ENCODE measurements at regions of chr7 and their contacts with region 1.

Region 1: DNA sequence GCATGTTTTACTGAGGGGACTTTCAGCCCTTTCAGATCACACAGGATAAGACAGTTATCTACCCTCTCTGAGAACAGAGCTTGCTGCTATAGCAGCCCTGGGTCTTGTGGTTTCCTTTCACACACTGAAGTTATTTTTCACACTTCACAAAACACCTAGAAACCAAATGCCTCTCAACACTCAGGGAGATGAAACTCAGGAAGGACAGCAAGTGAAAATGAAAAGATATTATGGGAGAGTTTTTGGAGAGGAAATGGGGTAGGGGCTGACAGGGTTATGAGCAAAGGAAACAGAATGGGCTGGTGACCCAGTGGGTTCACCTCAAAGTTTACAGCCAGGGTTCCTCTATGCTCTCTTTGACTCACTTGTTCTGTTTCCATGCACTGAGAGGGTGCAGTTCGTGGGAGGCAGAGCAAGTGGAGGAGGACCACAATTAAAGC is 17.0 kb upstream of the GIMAP2 start:
- DNase-seq: peak; percentile 74
- H3K4me3 Mint-ChIP-seq: peak overlapping the region; percentile 74
- H3K27ac Mint-ChIP-seq: peak overlapping the region; percentile 91
- H3K4me1 Mint-ChIP-seq: peaks cover 94% of the 10 kb centered on the region
- H3K27me3 Mint-ChIP-seq: no peaks in the 10 kb centered on the region

Region 2: DNA sequence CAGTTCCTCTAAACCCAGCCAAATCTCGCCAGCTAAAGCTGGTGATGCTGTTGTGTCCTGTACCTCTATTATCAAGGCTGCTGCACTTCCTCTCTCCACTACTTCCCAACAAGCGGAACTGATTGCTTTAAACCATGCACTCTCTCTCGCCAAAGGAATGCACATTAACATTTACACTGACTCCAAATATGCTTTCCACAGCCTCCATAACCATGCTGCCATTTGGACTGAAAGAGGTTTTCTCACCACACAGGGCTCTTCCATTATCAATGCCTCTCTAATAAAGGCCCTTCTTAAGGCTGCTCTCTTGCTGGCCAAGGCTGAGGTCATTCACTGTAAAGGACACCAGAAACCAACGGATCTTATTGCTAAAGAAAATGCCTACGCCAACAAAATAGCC is 356.8 kb before region 1 on chr7:
- intact Hi-C with region 1: no loop called
- DNase-seq: no peak
- H3K4me3 Mint-ChIP-seq: no peak overlapping the region
- H3K27ac Mint-ChIP-seq: no peak overlapping the region
- H3K4me1 Mint-ChIP-seq: no peaks in the 10 kb centered on the region
- H3K27me3 Mint-ChIP-seq: no peaks in the 10 kb centered on the region

Region 3: GRCh38 chr7:150378853-150379440 is 289.5 kb before region 1 on chr7 and contains the start of gene ZNF775:
- intact Hi-C with region 1: loop called (anchors 5 kb)
- DNase-seq: peak; percentile 93
- H3K4me3 Mint-ChIP-seq: peak within 1 kb of the TSS; percentile 90
- H3K27ac Mint-ChIP-seq: peak within 1 kb of the TSS; percentile 83
- H3K4me1 Mint-ChIP-seq: peaks cover 59% of the 10 kb centered on the region
- H3K27me3 Mint-ChIP-seq: no peaks in the 10 kb centered on the region
- total RNA-seq, gene ZNF775: 3.9 and 4.5 TPM in 2 replicates

Region 4: GRCh38 chr7:150502519-150502918 is 166.0 kb before region 1 on chr7:
- intact Hi-C with region 1: loop called (anchors 5 kb)
- DNase-seq: no peak
- H3K4me3 Mint-ChIP-seq: peak overlapping the region; percentile 60
- H3K27ac Mint-ChIP-seq: peak overlapping the region; percentile 96
- H3K4me1 Mint-ChIP-seq: peaks cover 85% of the 10 kb centered on the region
- H3K27me3 Mint-ChIP-seq: no peaks in the 10 kb centered on the region

Region 5: GRCh38 chr7:150567169-150567568 is 101.3 kb before region 1 on chr7 and contains the start of gene GIMAP4:
- intact Hi-C with region 1: loop called (anchors 1 kb)
- DNase-seq: no peak
- H3K4me3 Mint-ChIP-seq: peak within 1 kb of the TSS; percentile 96
- H3K27ac Mint-ChIP-seq: peak within 1 kb of the TSS; percentile 99
- H3K4me1 Mint-ChIP-seq: peaks cover 93% of the 10 kb centered on the region
- H3K27me3 Mint-ChIP-seq: no peaks in the 10 kb centered on the region
- total RNA-seq, gene GIMAP4: 84.2 and 87.4 TPM in 2 replicates

Region 6: DNA sequence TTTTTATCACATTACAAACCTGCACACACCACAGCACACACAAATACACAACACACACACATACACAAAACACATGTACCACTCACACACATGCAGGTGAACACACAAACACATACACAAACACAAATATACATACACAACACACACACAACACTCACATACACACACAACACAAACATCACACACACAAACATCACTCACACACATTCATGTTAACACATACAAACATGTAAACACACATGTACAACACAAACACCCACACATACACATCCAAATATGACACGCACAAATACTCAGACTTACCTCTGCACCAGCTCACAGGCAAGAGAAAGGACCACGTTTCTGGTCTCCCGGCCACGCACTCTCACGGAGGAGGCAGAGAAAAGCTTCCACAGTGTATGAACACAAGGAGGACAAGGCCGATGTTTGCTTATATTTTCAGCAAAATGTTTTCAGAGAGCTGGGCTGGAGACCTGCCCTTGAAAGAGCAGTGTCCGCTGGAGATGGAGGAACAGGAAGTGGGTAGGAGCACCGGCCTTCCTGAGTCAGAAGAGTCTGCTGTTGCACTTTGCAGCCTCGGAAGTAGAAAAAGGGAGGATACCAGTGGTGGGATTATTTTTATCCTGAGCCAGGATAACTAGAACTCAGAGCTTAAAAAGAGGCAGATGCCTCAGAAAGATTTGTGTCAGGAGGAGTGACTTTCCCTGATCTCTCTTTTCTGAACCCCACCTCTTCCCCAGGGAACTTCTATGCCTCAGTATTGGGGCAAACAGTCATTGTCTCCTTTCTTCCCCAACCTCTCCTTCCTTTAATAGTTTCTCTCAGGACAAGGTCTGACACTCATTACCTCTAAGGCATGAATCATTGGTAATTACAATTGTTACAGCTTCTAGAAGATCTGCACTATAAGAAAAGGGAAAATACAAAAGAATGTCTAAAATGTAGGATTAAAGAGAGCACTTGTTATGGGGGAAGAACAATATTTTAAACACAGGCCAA is 36.3 kb before region 1 on chr7 and contains the start of gene GIMAP6:
- intact Hi-C with region 1: loop called (anchors 1 kb)
- DNase-seq: peak; percentile 48
- H3K4me3 Mint-ChIP-seq: peak within 1 kb of the TSS; percentile 94
- H3K27ac Mint-ChIP-seq: peak within 1 kb of the TSS; percentile 94
- H3K4me1 Mint-ChIP-seq: peaks cover 68% of the 10 kb centered on the region
- H3K27me3 Mint-ChIP-seq: no peaks in the 10 kb centered on the region
- total RNA-seq, gene GIMAP6: 38.7 and 41.3 TPM in 2 replicates

Region 7: DNA sequence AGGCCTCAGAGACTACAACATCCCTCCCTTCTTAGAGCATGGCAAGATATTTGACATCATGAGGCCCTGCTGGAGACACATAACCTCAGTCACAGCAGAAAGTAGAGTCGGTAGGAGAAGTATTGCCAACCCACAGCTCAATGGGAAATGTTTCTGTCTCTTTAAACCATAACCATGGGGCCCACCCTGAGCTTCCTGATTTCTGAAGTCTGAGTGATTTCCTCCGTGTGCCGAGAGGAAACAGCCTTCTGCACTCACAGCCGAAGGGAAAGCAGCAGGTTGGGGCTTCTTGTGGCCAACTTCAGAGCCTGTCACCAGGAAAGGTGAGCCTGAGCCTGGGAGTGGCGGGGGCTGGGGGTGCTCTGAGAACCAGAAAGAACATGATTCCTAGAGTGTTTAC is 47.9 kb after region 1 on chr7 and contains the start of gene GIMAP1:
- intact Hi-C with region 1: loop called (anchors 1 kb)
- DNase-seq: peak; percentile 58
- H3K4me3 Mint-ChIP-seq: peak within 1 kb of the TSS; percentile 97
- H3K27ac Mint-ChIP-seq: peak within 1 kb of the TSS; percentile 75
- H3K4me1 Mint-ChIP-seq: peaks cover 64% of the 10 kb centered on the region
- H3K27me3 Mint-ChIP-seq: no peaks in the 10 kb centered on the region
- total RNA-seq, gene GIMAP1: 4.6 and 4.9 TPM in 2 replicates

Region 8: DNA sequence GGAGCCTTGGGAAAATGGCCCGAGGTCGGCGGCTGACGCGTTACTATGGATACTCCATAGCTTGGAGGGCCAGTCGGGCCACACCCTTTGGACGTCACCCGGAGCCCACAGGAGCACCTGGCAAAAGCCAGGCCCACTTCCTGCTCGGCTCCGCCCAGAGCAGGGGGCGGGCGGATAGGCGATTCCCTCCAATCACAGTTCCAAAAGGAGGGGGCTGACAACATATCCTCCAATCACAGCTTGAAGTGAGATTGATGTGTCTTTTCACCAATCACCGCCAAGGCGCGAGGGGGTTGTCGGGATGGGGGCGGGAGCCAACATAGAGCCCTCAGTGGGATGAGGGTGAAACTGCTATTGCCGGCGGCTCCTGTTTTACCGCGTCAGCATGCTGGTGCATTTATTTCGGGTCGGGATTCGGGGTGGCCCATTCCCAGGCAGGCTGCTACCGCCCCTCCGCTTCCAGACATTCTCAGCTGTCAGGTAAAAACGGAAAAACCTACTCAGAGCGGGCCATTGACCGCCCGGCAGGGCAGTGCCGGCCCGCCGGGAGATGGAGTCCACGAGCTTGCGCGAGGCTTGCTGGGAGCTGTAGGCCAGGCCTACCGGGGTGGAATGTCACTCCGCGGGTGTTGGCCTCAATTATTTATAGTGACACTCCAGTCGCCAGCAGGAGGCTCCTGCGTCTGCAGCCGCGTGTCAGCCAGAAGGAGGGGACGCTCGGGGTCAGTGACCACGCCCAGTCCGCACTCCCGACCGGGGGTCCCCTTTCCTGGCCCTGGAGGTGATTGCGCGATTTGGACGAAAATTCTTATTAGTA is 359.8 kb after region 1 on chr7 and contains the start of gene ABCB8:
- intact Hi-C with region 1: loop called (anchors 5 kb)
- DNase-seq: peak; percentile 98
- H3K4me3 Mint-ChIP-seq: peak within 1 kb of the TSS; percentile 94
- H3K27ac Mint-ChIP-seq: peak within 1 kb of the TSS; percentile 95
- H3K4me1 Mint-ChIP-seq: peaks cover 21% of the 10 kb centered on the region
- H3K27me3 Mint-ChIP-seq: peaks cover 2% of the 10 kb centered on the region
- total RNA-seq, gene ABCB8: 56.9 and 57.9 TPM in 2 replicates

Measured in activated T-helper 1 cell treated with anti-CD3 and anti-CD28 coated beads, Interleukin-12 subunit alpha, Interleukin-12 subunit beta, Interleukin-2, Interleukin-4 antibody, amounts not matched to agents 30 ng/mL and 10 ng/mL and 1 ng/mL, durations not matched to agents 14 hours and 24 hours and 36 hours (primary cell).